ENCODE measurements at regions of chr1 and their contacts with region 1.

Region 1: GRCh38 chr1:155277070-155277895 is at the start of gene HCN3:
- DNase-seq: peak; percentile 100

Region 2: DNA sequence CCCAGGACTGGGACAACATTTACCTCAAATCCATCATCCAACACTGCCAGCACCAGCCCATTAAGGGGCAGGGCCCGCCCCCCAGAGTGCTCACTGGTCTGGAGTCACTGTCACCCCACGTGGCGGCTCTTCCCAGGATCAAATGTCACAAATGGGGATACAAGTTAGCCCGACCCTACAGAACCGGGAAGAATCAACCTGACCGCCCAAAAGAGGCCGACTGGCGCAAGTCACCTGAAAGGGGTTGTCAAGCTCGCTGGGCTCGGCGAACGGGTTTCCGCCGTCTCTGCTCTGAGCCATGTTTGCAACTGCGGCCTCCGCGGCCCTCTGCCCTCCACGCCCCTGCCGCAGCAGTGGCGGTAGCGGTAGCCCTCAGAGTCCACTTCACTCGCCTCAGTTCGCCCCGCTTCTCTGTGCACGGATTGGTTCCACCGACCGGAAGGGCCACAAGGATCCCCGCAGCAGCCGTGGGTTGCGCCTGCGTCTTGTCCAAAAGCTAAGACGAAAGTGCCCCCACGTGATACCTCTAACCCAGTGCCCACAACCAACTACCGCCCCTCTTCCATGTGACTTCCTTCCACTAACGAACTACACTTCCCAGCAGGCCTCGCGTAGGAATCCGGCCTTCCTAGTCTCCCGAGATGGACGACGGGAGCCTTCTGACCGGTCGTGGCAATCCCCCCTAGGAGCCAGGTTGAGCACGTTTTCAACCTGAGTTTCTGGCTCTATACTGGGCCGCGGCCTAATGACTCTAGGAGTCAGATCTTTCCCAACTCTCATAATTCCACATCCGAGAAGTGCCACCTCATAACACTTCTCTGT is 15.2 kb before region 1 on chr1 and contains the start of gene SCAMP3:
- CTCF ChIA-PET with region 1: interaction called, 3 read pairs
- POLR2A ChIA-PET with region 1: interaction called, 37 read pairs
- DNase-seq: peak; percentile 98

Region 3: GRCh38 chr1:155293086-155293749 is 15.9 kb after region 1 on chr1:
- CTCF ChIA-PET with region 1: interaction called, 5 read pairs
- POLR2A ChIA-PET with region 1: interaction called, 12 read pairs
- DNase-seq: no peak

Region 4: GRCh38 chr1:155308493-155309422 is 31.5 kb after region 1 on chr1 and contains the start of gene FDPS:
- CTCF ChIA-PET with region 1: interaction called, 6 read pairs
- POLR2A ChIA-PET with region 1: interaction called, 17 read pairs
- DNase-seq: peak; percentile 98

Region 5: GRCh38 chr1:155323798-155324610 is 46.7 kb after region 1 on chr1:
- CTCF ChIA-PET with region 1: interaction called, 6 read pairs
- POLR2A ChIA-PET with region 1: interaction called, 35 read pairs
- DNase-seq: peak; percentile 95

Region 6: DNA sequence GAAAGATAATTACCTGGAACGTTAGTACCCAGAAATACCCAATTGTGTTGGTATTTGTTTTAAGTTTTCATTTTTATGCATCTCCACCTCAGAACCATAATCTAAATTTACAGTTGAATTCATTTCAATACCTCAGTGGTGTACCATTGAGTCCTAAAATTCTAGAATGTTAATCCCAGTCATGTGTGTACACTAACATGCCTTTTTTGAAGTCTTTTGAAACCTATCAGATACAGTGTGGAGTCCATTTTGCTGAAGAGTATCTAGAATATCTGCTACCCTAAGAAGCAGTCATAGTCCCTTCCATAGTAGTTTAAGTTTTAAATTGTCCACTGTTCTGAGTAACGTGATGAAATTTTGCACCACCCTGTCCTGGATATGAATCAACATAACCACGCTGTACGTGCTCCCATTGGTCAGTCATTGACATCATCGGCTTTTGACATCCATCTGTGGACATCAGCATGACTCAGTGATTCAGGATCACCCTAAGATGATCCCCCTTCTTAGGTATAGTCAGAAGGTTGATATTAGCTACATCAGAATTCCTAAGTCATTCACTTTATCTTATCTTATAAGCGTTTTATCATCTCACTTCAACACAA is 292.8 kb after region 1 on chr1:
- CTCF ChIA-PET with region 1: interaction called, 11 read pairs
- POLR2A ChIA-PET with region 1: no interaction called
- DNase-seq: no peak